ENCODE measurements at regions of chr12 and their contacts with region 1.

Region 1: GRCh38 chr12:12724661-12725545 is 7.7 kb downstream of the CDKN1B start:
- DNase-seq: peak; percentile 90
- ATAC-seq: peak; percentile 41
- H3K4me3 ChIP-seq: peak overlapping the region; percentile 94
- H3K27ac ChIP-seq: peak overlapping the region; percentile 97
- H3K4me1 ChIP-seq: peaks cover 26% of the 10 kb centered on the region
- H3K27me3 ChIP-seq: no peaks in the 10 kb centered on the region
- CTCF ChIP-seq: no peak

Region 2: DNA sequence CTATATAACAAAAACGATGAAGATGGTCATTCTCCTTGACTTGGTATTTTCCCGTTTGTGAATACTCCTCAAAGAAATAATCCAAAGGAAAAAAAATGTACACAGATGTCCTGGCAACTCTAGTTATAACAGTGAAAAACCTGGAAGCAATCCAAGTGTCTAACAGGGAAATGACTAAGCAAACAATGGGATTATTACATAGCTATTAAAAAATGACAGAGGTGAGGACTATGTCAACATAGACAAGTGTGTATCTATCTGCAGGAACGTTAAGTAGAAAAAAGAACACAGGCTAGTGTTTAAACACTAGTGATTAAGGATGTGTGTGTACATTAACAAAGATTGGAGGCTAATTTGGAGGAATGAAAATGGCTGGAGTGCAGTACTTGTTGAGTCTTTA is 54.6 kb after region 1 on chr12:
- CTCF ChIA-PET with region 1: no interaction called
- POLR2A ChIA-PET with region 1: no interaction called
- intact Hi-C with region 1: loop called (anchors 5 kb)
- DNase-seq: peak; percentile 90
- ATAC-seq: peak; percentile 93
- H3K4me3 ChIP-seq: no peak overlapping the region
- H3K27ac ChIP-seq: no peak overlapping the region
- H3K4me1 ChIP-seq: peaks cover 27% of the 10 kb centered on the region
- H3K27me3 ChIP-seq: no peaks in the 10 kb centered on the region
- CTCF ChIP-seq: no peak

Region 3: DNA sequence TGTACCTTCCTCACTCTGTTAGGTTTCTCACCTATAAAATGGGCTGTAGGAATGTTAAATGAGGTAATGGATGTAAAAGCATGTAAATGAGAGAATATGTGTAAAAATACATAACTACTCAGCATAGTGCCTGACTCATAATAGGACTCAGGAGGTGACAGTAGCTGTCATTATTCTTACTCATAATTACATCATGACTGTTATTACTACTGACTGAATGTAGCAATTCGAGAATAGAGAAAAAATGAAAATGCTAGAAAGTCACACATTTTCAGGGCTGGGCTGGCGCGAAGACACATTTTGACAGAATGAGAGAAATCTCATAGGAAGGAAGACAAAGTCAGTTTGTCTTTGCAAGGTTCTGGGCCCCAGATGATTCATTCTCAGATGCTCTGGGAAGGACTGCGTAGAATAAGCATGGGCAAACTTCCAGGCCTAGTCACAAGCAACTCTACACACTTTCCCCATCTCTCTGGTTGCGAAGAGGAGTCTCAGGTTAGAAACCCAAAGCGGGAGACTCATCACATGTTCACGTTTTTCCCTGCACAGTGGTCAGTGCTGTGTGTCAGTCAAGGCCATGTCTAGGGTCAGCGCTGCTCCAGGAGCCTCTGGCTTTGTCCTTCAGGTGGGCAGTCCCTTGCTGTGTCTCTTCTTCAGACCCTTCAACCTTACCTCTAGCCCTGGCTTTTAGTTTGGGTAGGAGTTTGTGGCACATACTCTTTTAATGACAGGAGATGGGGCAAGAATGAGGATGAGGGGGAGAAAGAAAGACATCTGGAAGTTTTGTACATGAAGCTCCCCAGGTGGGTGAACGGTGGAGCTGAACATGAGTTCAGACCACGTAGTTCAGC is 174.9 kb after region 1 on chr12:
- CTCF ChIA-PET with region 1: no interaction called
- POLR2A ChIA-PET with region 1: no interaction called
- intact Hi-C with region 1: loop called (anchors 5 kb)
- DNase-seq: peak; percentile 82
- ATAC-seq: peak; percentile 38
- H3K4me3 ChIP-seq: peak overlapping the region; percentile 32
- H3K27ac ChIP-seq: peak overlapping the region; percentile 83
- H3K4me1 ChIP-seq: peaks cover 84% of the 10 kb centered on the region
- H3K27me3 ChIP-seq: no peaks in the 10 kb centered on the region
- CTCF ChIP-seq: no peak

Region 4: DNA sequence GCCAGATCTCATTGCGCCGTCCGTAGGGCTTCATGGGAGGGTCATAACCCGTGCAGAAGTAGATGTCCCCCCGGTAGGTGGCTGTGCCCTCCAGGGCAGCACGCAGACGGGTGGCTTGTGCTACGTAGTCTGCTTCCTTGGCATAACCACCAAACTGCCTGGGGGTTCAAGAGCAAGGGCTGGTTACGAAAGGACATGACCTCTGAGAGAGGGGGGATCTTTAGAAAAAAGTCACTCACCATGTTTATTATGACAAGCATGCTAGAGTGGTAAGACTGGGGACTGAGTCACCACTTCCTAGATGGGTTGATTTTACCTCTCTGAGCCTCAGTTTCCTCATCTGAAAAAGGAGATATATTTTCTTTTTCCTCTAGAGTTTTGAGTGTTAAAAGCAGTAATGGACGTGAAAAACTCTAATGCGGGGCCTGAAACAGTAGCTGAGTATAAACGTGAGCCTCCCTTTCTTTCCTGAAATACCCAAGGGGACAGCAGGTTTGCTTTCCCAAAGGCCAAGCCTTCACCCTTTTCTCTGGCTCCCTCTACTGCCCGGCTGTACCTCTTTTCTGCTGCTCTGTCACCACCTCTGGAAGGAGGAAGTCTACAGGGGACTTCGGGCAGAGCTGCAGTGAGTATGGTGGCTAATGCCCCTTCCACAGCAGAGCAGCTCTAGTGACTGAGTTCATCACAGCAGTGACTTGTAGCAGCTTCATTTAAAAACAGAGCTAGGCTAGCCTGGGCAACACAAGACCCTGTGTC is 250.6 kb after region 1 on chr12:
- CTCF ChIA-PET with region 1: no interaction called
- POLR2A ChIA-PET with region 1: no interaction called
- intact Hi-C with region 1: loop called (anchors 5 kb)
- DNase-seq: peak; percentile 53
- ATAC-seq: peak; percentile 39; the same call in 1 of the 2 replicates
- H3K4me3 ChIP-seq: no peak overlapping the region; the same call in 1 of the 2 replicates
- H3K27ac ChIP-seq: peak overlapping the region; percentile 72
- H3K4me1 ChIP-seq: peaks cover 30% of the 10 kb centered on the region
- H3K27me3 ChIP-seq: no peaks in the 10 kb centered on the region
- CTCF ChIP-seq: peak; percentile 69